ENCODE measurements at regions of chr12 and their contacts with region 1.

Region 1: GRCh38 chr12:80472902-80473500 is 29.0 kb downstream of the PTPRQ start:
- DNase-seq: peak; percentile 35
- ATAC-seq: peak; percentile 65; the same call in 2 of the 3 replicates
- H3K4me3 ChIP-seq: no peak overlapping the region
- H3K27ac ChIP-seq: no peak overlapping the region
- H3K4me1 ChIP-seq: no peaks in the 10 kb centered on the region
- H3K27me3 ChIP-seq: no peaks in the 10 kb centered on the region
- CTCF ChIP-seq: peak; percentile 69
- EP300 ChIP-seq: no peak
- POLR2A ChIP-seq: no peak
- RAD21 ChIP-seq: peak; percentile 40; the same call in 1 of the 2 replicates

Region 2: GRCh38 chr12:80509781-80510556 is 37.0 kb after region 1 on chr12:
- CTCF ChIA-PET with region 1: no interaction called
- POLR2A ChIA-PET with region 1: no interaction called
- in situ Hi-C with region 1: no loop called
- intact Hi-C with region 1: no loop called
- DNase-seq: no peak
- ATAC-seq: no peak
- H3K4me3 ChIP-seq: no peak overlapping the region
- H3K27ac ChIP-seq: no peak overlapping the region
- H3K4me1 ChIP-seq: no peaks in the 10 kb centered on the region
- H3K27me3 ChIP-seq: no peaks in the 10 kb centered on the region
- CTCF ChIP-seq: no peak
- EP300 ChIP-seq: no peak
- POLR2A ChIP-seq: no peak
- RAD21 ChIP-seq: no peak

Region 3: GRCh38 chr12:80946594-80946993 is 473.6 kb after region 1 on chr12:
- CTCF ChIA-PET with region 1: no interaction called
- POLR2A ChIA-PET with region 1: no interaction called
- in situ Hi-C with region 1: no loop called
- intact Hi-C with region 1: loop called (anchors 10 kb)
- DNase-seq: no peak
- ATAC-seq: 0 out of 3 replicates have a peak, but pooled peaks have one; percentile 48
- H3K4me3 ChIP-seq: no peak overlapping the region
- H3K27ac ChIP-seq: no peak overlapping the region
- H3K4me1 ChIP-seq: peaks cover 22% of the 10 kb centered on the region
- H3K27me3 ChIP-seq: no peaks in the 10 kb centered on the region
- CTCF ChIP-seq: peak; percentile 34
- EP300 ChIP-seq: no peak
- POLR2A ChIP-seq: no peak
- RAD21 ChIP-seq: no peak

Measured in HepG2 (cell line).